Activated CD4-positive, alpha-beta memory T cell treated with anti-CD3 and anti-CD28 coated beads for 36 hours (primary cell): ENCODE measurements at regions of chrX and their contacts with region 1.

Region 1: GRCh38 chrX:136711147-136711546 is 63.2 kb downstream of the CD40LG start:
- DNase-seq: peak; percentile 57
- H3K4me3 Mint-ChIP-seq: peak overlapping the region; percentile 1
- H3K27ac Mint-ChIP-seq: peak overlapping the region; percentile 93
- H3K4me1 Mint-ChIP-seq: peaks cover 61% of the 10 kb centered on the region
- H3K27me3 Mint-ChIP-seq: no peaks in the 10 kb centered on the region

Region 2: GRCh38 chrX:136694431-136695087 is 16.6 kb before region 1 on chrX:
- CTCF ChIA-PET with region 1: interaction called, 11 read pairs
- POLR2A ChIA-PET with region 1: no interaction called
- intact Hi-C with region 1: no loop called
- DNase-seq: no peak
- H3K4me3 Mint-ChIP-seq: peak overlapping the region; percentile 77
- H3K27ac Mint-ChIP-seq: peak overlapping the region; percentile 97
- H3K4me1 Mint-ChIP-seq: peaks cover 75% of the 10 kb centered on the region
- H3K27me3 Mint-ChIP-seq: no peaks in the 10 kb centered on the region

Region 3: DNA sequence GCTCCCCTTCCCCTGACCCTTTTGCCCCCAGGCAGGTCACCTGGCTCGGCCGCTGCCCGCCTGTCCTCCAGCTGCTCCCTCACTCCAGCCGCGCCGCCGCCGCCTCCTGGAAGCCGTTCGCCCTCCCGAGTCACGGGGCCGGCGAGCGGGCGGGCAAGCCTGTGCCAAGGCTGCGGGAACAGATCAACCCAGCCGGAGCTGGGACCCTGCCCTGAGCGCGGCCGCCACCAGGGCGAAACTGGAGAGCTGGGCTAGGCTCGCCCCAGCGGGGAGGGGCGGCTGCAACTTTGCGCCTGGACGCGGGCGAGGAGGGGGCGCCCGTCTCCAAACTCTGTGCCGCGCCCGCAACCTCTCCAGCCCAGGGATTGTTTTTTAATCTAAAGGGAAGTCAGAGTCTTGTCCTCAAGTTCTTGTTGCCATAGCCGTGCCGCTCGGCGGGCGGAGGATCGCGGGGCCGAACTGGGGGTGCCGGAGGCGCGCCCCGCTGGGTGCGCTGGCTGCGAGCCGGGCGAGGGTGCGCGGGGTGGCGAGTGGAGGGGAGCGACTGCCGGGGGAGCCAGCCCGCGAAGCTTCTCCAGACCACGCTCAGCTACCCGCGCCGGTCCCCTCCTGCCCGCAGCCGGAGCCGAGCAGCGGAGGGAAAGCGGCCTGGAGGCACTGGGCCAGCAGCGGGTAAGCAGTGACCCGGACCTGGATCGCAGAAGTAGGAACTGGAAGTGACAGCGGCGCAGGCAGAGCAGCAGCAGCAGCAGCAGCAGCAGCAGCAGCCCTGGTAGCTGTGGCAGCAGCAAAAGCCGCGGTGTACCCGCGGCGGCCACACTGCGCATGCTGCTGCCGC is 56.2 kb after region 1 on chrX:
- CTCF ChIA-PET with region 1: interaction called, 4 read pairs
- POLR2A ChIA-PET with region 1: interaction called, 3 read pairs
- intact Hi-C with region 1: loop called (anchors 2 kb)
- DNase-seq: peak; percentile 55
- H3K4me3 Mint-ChIP-seq: peak overlapping the region; percentile 76
- H3K27ac Mint-ChIP-seq: peak overlapping the region; percentile 87
- H3K4me1 Mint-ChIP-seq: peaks cover 54% of the 10 kb centered on the region
- H3K27me3 Mint-ChIP-seq: no peaks in the 10 kb centered on the region

Region 4: GRCh38 chrX:136909706-136910564 is 198.8 kb after region 1 on chrX:
- CTCF ChIA-PET with region 1: no interaction called
- POLR2A ChIA-PET with region 1: no interaction called
- intact Hi-C with region 1: loop called (anchors 5 kb)
- DNase-seq: peak; percentile 78
- H3K4me3 Mint-ChIP-seq: peak overlapping the region; percentile 91
- H3K27ac Mint-ChIP-seq: peak overlapping the region; percentile 90
- H3K4me1 Mint-ChIP-seq: peaks cover 15% of the 10 kb centered on the region
- H3K27me3 Mint-ChIP-seq: no peaks in the 10 kb centered on the region